Psoas muscle (tissue), 8 donors: ENCODE measurements at regions of chr6 and their contacts with region 1.

Region 1: DNA sequence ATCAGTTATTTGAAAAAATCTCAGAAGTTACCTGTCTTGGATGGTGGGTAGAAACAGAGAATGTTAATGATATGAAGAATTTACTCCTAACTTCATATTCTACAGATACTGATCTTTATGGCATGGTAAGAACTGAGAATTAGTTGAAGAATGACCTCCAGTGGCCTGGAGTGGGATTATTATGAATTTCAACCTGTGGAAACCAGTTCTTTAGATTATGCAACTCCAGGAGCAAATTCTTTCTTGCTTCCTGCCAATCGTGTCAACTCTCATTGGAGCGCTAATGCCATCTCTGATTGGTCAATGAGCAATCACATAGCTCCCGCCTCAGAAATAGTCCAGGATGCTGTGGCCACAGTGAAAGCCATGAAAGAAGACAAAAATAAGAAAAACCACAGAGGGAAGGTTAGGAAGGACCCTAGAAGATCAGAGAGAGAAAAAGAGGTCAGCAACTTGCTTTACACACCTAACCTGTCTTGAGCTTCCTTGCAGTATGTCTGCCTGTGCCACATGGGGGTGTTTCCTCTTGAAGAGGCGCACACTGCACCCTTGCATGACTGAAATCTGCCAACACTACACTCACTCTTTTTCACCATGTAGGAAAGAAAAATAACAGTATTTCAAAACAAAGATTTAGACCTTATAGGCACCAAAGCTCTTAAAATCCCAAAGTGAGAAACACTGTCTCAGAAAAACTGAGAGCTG is 40.4 kb downstream of the LYRM2 start:
- DNase-seq: no peak
- ATAC-seq: peak in 2 of 4 donors; percentile 27 to 32
- H3K4me3 ChIP-seq: no peak overlapping the region
- H3K27ac ChIP-seq: no peak overlapping the region
- H3K4me1 ChIP-seq: peaks cover 10% of the 10 kb centered on the region
- H3K27me3 ChIP-seq: no peaks in the 10 kb centered on the region
- CTCF ChIP-seq: no peak

Region 2: GRCh38 chr6:89501249-89501621 is 96.9 kb before region 1 on chr6:
- intact Hi-C with region 1: loop called in 1 of 2 experiments (anchors 5 kb)
- DNase-seq: no peak
- ATAC-seq: no peak
- H3K4me3 ChIP-seq: no peak overlapping the region
- H3K27ac ChIP-seq: no peak overlapping the region
- H3K4me1 ChIP-seq: no peaks in the 10 kb centered on the region
- H3K27me3 ChIP-seq: no peaks in the 10 kb centered on the region
- CTCF ChIP-seq: no peak

Region 3: GRCh38 chr6:89644873-89645272 is 46.7 kb after region 1 on chr6:
- intact Hi-C with region 1: no loop called
- DNase-seq: no peak
- ATAC-seq: no peak
- H3K4me3 ChIP-seq: no peak overlapping the region
- H3K27ac ChIP-seq: no peak overlapping the region
- H3K4me1 ChIP-seq: peaks cover 13% of the 10 kb centered on the region
- H3K27me3 ChIP-seq: no peaks in the 10 kb centered on the region
- CTCF ChIP-seq: no peak